ENCODE measurements at regions of chr2 and their contacts with region 1.

Region 1: GRCh38 chr2:47070920-47071824 is 83.9 kb downstream of the STPG4 start:
- DNase-seq: peak; percentile 90 to 99 (median 93)
- H3K4me3 ChIP-seq: peak overlapping the region in 1 of 3 experiments; percentile 38
- H3K4me3 Mint-ChIP-seq: peak overlapping the region; percentile 66 to 88
- H3K27ac ChIP-seq: peak overlapping the region; percentile 100
- H3K27ac Mint-ChIP-seq: peak overlapping the region; percentile 98 to 100 (median 100)
- H3K4me1 ChIP-seq: peaks cover 92 to 93% of the 10 kb centered on the region in 2 donors
- H3K4me1 Mint-ChIP-seq: peaks cover 95% of the 10 kb centered on the region
- H3K27me3 ChIP-seq: no peaks in the 10 kb centered on the region
- H3K27me3 Mint-ChIP-seq: peaks cover 0 to 10% (median 2%) of the 10 kb centered on the region in 3 donors
- CTCF ChIP-seq: no peak

Region 2: GRCh38 chr2:46984642-46985476 is 86.3 kb before region 1 on chr2:
- intact Hi-C with region 1: loop called in 1 of 2 experiments (anchors 5 kb)
- DNase-seq: peak; percentile 94 to 98 (median 97)
- H3K4me3 ChIP-seq: peak overlapping the region in 1 of 3 experiments; percentile 53
- H3K4me3 Mint-ChIP-seq: peak overlapping the region; percentile 61 to 83
- H3K27ac ChIP-seq: peak overlapping the region; percentile 97 to 98
- H3K27ac Mint-ChIP-seq: peak overlapping the region; percentile 93 to 100 (median 99)
- H3K4me1 ChIP-seq: peaks cover 77% of the 10 kb centered on the region in 2 donors
- H3K4me1 Mint-ChIP-seq: peaks cover 74% of the 10 kb centered on the region
- H3K27me3 ChIP-seq: no peaks in the 10 kb centered on the region
- H3K27me3 Mint-ChIP-seq: peaks cover 0 to 3% (median 0%) of the 10 kb centered on the region in 3 donors
- CTCF ChIP-seq: no peak

Region 3: DNA sequence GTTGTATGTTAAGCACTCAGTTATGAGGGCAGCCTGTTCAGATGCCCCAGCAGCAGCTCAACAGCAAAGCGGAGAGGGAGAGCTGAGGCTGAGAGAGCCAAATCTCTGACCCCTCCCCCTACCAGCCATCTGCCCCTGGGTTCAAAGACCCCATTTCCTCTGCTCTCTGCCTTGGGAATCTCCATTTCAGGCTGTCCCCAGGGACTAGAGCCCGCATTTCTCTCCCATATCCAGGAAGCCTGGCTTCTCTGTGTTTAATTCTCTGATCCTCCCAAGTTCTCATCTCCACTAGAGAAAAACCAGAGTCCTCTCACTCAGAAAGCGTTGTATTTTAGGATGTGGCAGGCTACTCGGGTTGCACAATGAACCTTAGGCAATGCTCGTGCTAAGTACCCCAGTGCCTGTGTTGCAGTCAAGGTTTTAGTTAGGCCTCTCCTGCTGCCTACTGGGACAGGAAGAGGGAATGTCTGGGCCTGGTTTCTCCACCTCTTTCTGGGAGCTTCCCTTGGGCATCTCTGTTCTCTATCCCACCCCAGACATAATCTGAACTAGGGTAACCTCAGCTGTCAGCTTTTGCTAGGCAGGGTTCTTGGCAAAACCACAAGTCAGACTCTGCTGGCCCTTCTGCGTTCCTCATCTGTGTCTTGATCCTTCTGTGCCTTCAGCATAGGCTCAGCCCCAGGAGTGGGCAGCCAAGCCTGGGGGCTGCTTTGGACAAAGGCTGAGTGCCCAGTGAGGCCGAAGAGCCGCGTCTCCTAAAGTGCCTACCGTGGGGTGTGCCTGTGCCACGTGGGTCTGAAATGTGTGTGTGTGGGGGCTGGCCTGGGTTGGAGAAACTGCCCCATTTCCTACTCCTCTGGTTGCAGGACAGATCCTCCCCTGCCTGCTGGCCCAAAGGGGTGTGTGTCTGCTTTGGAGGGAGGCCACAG is 12.9 kb before region 1 on chr2:
- intact Hi-C with region 1: loop called (anchors 2 kb)
- DNase-seq: peak; percentile 83 to 96 (median 86)
- H3K4me3 ChIP-seq: peak overlapping the region in 1 of 3 experiments; percentile 27
- H3K4me3 Mint-ChIP-seq: peak overlapping the region; percentile 53 to 78
- H3K27ac ChIP-seq: peak overlapping the region; percentile 99
- H3K27ac Mint-ChIP-seq: peak overlapping the region; percentile 99 to 100 (median 99)
- H3K4me1 ChIP-seq: peaks cover 52 to 55% of the 10 kb centered on the region in 2 donors
- H3K4me1 Mint-ChIP-seq: peaks cover 65% of the 10 kb centered on the region
- H3K27me3 ChIP-seq: no peaks in the 10 kb centered on the region
- H3K27me3 Mint-ChIP-seq: peaks cover 0 to 6% (median 0%) of the 10 kb centered on the region in 3 donors
- CTCF ChIP-seq: no peak